PC-9 (cell line): ENCODE measurements at regions of chr3 and their contacts with region 1.

Region 1: DNA sequence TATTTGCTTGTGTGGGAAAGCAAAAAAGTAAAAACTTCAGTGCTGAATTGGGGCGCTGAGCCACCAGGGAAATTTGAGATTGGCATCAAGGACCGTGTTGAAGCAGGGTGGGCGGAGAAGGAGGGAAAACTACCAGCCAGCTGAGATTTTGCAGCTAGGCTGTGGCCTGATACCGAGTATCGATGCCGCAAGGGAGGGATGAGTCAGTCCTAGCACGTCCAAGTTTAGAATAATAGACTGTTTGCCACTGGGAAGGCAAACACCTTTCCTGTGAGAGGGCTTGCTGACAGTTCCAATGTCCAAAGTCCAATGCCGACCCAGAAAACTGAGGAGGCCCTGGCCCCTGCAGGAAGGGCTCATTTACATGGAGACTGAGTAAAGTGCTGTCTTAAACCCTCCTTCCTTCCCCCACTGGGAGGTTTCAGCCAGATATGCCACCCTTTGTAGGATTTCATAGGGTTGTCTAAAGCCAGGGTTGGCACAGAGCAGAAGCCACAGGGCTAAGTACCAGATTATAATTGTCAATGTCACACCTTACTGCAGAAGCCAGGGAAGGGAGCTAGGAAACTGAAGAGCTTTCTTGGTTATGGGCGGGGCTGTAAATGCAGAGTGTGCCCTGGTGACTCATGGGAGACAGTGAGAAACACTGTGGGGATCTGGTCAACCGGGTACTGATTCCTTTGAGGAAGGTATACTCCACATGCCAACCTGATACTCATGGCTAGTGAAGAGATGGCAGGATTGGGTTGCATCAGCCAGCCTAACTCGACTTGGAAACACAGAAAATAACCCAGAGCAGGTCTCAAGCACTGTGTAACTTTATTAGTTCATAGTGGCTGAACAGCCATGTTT is 28.4 kb upstream of the PIK3CB start:
- DNase-seq: peak; percentile 78 to 97
- H3K4me3 ChIP-seq: peak overlapping the region; percentile 39; the same call in 1 of the 2 replicates
- H3K27ac ChIP-seq: peak overlapping the region; percentile 100
- H3K4me1 ChIP-seq: peaks cover 35% of the 10 kb centered on the region
- H3K27me3 ChIP-seq: no peaks in the 10 kb centered on the region
- CTCF ChIP-seq: no peak

Region 2: GRCh38 chr3:138834359-138835212 is 28.6 kb before region 1 on chr3 and contains the start of gene PIK3CB:
- CTCF ChIA-PET with region 1: interaction called, 3 read pairs
- POLR2A ChIA-PET with region 1: interaction called, 5 read pairs
- intact Hi-C with region 1: loop called (anchors 1 kb)
- DNase-seq: peak; percentile 63 to 92
- H3K4me3 ChIP-seq: peak within 1 kb of the TSS; percentile 63
- H3K27ac ChIP-seq: peak within 1 kb of the TSS; percentile 92
- H3K4me1 ChIP-seq: peaks cover 16% of the 10 kb centered on the region
- H3K27me3 ChIP-seq: no peaks in the 10 kb centered on the region
- CTCF ChIP-seq: peak; percentile 34; the same call in 1 of the 2 replicates
- total RNA-seq, gene PIK3CB: 41.9 and 47.8 TPM in 2 replicates

Region 3: DNA sequence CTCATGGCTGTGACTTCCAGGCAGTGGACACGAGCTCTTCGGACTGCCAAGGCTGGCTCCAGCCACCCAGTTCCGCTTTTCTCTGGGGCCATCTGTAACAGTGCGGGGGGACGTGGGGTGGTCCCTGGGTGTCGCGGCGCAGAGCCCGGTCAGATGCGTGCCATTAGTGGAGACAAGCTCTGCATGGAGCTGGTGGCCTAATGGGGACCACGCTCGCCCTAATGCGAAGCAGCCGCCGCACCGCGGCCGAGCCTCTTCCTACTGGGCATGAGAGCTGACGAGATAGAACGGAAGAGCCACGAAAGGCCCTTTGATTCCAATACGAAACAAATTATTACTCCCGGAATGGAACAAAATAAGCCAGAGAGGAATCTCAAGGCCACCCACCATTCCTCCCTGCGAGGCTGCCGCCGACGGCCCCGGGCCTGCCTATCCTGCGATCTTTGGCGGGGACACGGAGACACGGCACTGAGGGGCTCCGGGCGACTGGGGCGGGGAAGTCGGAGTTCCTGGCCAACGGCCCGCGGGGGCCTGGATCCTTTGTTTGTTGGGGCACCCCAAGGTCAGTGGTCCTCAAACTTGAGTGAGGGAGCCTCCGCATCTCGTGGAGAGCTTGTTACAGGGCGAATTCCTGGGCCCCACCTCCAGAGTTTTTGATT is 65.7 kb after region 1 on chr3:
- CTCF ChIA-PET with region 1: interaction called, 13 read pairs
- POLR2A ChIA-PET with region 1: no interaction called
- intact Hi-C with region 1: no loop called
- DNase-seq: no peak
- H3K4me3 ChIP-seq: no peak overlapping the region
- H3K27ac ChIP-seq: no peak overlapping the region
- H3K4me1 ChIP-seq: no peaks in the 10 kb centered on the region
- H3K27me3 ChIP-seq: no peaks in the 10 kb centered on the region
- CTCF ChIP-seq: no peak